K562 (cell line): ENCODE measurements at regions of chr15 and their contacts with region 1.

Region 1: GRCh38 chr15:42474827-42475226 is 16.1 kb downstream of the ZNF106 start:
- DNase-seq: peak in 1 of 4 experiments; percentile 16
- ATAC-seq: peak; percentile 36; the same call in 2 of the 3 replicates
- H3K4me3 ChIP-seq: no peak overlapping the region
- H3K27ac ChIP-seq: no peak overlapping the region
- H3K4me1 ChIP-seq: no peaks in the 10 kb centered on the region
- H3K27me3 ChIP-seq: no peaks in the 10 kb centered on the region
- CTCF ChIP-seq: no peak
- EP300 ChIP-seq: no peak
- POLR2A ChIP-seq: no peak
- RAD21 ChIP-seq: no peak

Region 2: GRCh38 chr15:42079401-42079908 is 395.4 kb before region 1 on chr15:
- CTCF ChIA-PET with region 1: no interaction called
- POLR2A ChIA-PET with region 1: no interaction called
- in situ Hi-C with region 1: no loop called
- intact Hi-C with region 1: loop called (anchors 10 kb)
- DNase-seq: peak; percentile 27 to 42 (median 41)
- ATAC-seq: peak; percentile 43
- H3K4me3 ChIP-seq: no peak overlapping the region; the same call in 1 of the 2 replicates
- H3K27ac ChIP-seq: no peak overlapping the region
- H3K4me1 ChIP-seq: peaks cover 9 to 17% of the 10 kb centered on the region in 2 experiments
- H3K27me3 ChIP-seq: peaks cover 7 to 42% of the 10 kb centered on the region in 2 experiments
- CTCF ChIP-seq: peak in 1 of 3 experiments; percentile 17; a peak in 2 of 6 replicates
- EP300 ChIP-seq: no peak
- POLR2A ChIP-seq: no peak
- RAD21 ChIP-seq: peak in 1 of 2 experiments; percentile 35; a peak in 2 of 4 replicates

Region 3: DNA sequence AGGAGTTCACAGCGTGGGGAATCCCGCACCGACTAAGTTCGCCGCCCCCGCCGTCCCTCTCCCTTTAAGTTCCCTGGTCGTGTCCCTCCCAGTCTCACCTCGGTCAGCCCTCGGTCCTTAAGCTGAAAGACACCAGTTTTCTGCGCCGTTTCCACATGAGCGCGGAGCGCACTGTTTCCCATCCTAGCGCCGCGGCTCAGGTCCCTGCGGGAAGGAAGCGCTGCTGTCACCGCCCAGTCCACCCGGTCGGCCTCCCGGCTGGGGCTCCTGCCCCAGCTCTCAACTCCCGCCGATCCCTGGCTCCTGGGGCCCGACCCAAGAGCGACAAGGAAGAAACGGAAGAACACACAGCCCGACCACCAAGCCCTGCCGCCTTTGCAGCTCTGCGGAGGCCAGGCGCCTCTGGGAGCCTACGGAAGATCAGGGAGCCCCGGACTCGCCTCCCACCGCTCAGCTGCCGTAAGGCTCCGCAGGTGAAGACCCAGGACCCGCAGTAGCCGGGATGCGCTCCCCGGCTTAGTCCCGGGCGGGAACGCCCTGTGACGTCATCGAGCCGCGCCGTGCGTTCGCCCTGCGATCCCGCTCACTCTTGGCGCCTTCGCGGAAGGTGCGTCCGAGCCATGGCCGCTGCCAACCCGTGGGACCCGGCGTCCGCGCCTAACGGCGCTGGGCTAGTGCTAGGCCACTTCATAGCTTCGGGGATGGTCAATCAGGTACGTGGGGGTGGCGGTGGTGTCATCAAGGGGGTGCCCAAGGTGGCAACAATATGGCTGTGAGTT is 73.6 kb after region 1 on chr15 and contains the starts of genes HAUS2 and LRRC57:
- CTCF ChIA-PET with region 1: no interaction called
- POLR2A ChIA-PET with region 1: no interaction called
- in situ Hi-C with region 1: no loop called
- intact Hi-C with region 1: no loop called
- DNase-seq: peak; percentile 93 to 94 (median 94)
- ATAC-seq: peak; percentile 92
- H3K4me3 ChIP-seq: peak within 1 kb of the TSS; percentile 98
- H3K27ac ChIP-seq: peak within 1 kb of the TSS; percentile 89
- H3K4me1 ChIP-seq: peaks cover 9 to 20% of the 10 kb centered on the region in 2 experiments
- H3K27me3 ChIP-seq: no peaks in the 10 kb centered on the region
- CTCF ChIP-seq: no peak
- EP300 ChIP-seq: no peak; the same call in 1 of the 2 replicates
- POLR2A ChIP-seq: peak; percentile 92
- RAD21 ChIP-seq: no peak
- polyA plus RNA-seq, gene HAUS2: 51.6 to 57.8 TPM
- polyA plus RNA-seq, gene LRRC57: 3.9 to 7.2 TPM

Region 4: DNA sequence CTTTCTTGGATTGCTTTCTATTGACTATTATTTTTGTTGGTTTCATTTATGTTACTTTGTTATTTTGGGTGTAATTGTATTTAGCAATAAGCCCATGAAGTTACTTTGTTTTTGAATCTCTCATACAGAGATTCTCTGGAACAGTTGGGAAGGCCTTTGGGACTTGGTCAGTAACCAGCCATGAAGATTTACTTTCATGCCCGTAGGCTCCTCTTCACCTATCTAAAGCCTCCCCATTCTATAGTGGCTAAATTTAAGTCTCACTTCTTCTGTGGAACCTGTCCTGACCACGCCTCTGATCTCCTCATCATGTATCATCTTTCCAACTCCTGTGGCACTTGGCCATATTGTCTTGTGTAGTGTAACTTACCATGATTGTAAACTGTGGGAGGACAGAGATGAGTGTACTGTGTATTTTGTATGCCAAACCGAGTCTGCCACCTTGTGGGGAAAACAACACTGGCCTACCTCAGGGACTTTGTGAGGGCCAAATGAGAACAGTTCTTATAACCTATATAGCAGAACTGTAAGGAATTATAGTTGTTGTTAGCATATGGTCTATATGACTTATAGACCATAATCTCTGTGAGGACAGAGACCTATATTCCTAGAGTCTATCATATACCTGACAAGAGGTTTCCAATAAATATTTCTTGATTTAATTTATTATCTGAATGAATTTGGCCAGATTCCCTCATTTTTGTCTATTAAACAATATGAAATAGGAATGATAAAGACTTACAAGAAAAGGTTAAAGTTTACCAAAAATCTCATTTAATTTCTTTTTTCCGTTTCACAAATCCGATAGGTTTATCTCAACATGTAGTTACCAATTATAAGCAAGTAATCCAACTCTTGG is 175.6 kb after region 1 on chr15:
- CTCF ChIA-PET with region 1: no interaction called
- POLR2A ChIA-PET with region 1: no interaction called
- in situ Hi-C with region 1: no loop called
- intact Hi-C with region 1: loop called (anchors 5 kb)
- DNase-seq: peak; percentile 57 to 85 (median 68)
- ATAC-seq: peak; percentile 100
- H3K4me3 ChIP-seq: no peak overlapping the region
- H3K27ac ChIP-seq: no peak overlapping the region
- H3K4me1 ChIP-seq: peaks cover 0 to 3% of the 10 kb centered on the region in 2 experiments; a peak in 2 of 5 replicates
- H3K27me3 ChIP-seq: no peaks in the 10 kb centered on the region
- CTCF ChIP-seq: peak; percentile 74 to 89 (median 83)
- EP300 ChIP-seq: no peak
- POLR2A ChIP-seq: no peak
- RAD21 ChIP-seq: peak; percentile 87 to 95